Activated CD4-positive, alpha-beta memory T cell treated with anti-CD3 and anti-CD28 coated beads, Interleukin-2, amount 10 ng/mL, durations not matched to agents 7 days and 5 days (primary cell): ENCODE measurements at regions of chr6 and their contacts with region 1.

Region 1: GRCh38 chr6:75601304-75602245 is at the start of gene SENP6:
- DNase-seq: peak; percentile 75
- H3K4me3 Mint-ChIP-seq: peak within 1 kb of the TSS; percentile 90
- H3K27ac Mint-ChIP-seq: peak within 1 kb of the TSS; percentile 88
- H3K4me1 Mint-ChIP-seq: peaks cover 47% of the 10 kb centered on the region
- H3K27me3 Mint-ChIP-seq: no peaks in the 10 kb centered on the region
- total RNA-seq, gene SENP6: 58.6 to 59.2 TPM

Region 2: GRCh38 chr6:74735304-74735703 is 866.3 kb before region 1 on chr6:
- CTCF ChIA-PET with region 1: no interaction called
- POLR2A ChIA-PET with region 1: no interaction called
- DNase-seq: no peak
- H3K4me3 Mint-ChIP-seq: no peak overlapping the region
- H3K27ac Mint-ChIP-seq: no peak overlapping the region
- H3K4me1 Mint-ChIP-seq: no peaks in the 10 kb centered on the region
- H3K27me3 Mint-ChIP-seq: no peaks in the 10 kb centered on the region

Region 3: GRCh38 chr6:75284632-75285286 is 316.8 kb before region 1 on chr6 and contains the start of gene TMEM30A:
- CTCF ChIA-PET with region 1: interaction called, 3 read pairs
- POLR2A ChIA-PET with region 1: interaction called, 25 read pairs
- DNase-seq: peak; percentile 97
- H3K4me3 Mint-ChIP-seq: no peak within 1 kb of the TSS
- H3K27ac Mint-ChIP-seq: no peak within 1 kb of the TSS
- H3K4me1 Mint-ChIP-seq: peaks cover 47% of the 10 kb centered on the region
- H3K27me3 Mint-ChIP-seq: no peaks in the 10 kb centered on the region
- total RNA-seq, gene TMEM30A: 60.1 to 60.4 TPM

Region 4: DNA sequence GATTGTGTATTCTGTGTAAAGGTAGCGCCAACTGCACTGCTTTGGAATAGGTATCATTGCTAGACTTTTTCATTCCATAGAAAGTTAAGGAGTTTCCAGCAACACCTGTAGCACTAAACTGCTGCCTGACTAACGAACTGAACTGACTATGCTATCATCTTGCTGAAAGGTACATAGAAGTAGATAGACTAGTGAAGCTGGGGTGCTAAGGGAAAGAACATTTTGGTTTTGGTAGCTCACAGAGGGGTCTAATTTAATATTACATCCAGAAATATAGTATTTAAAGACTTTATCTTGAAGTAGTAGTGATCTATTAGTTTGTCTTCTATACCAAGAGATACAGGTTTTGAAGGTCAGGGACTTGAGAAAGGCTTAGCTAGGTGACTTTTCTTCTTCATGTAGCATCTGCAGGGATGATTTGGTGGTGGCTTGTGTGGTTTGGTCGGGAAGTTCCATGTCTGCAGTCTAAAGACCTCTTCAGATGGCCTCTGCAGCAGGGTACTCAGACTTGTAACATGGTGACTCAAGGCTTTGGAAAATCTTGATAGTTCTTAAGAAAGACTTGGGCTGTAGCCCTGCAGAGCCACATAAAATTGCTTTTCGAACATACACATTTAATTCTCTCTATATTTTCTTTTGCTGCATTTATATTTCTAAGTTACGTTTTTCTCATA is 10.3 kb after region 1 on chr6:
- CTCF ChIA-PET with region 1: interaction called, 3 read pairs
- POLR2A ChIA-PET with region 1: interaction called, 49 read pairs
- DNase-seq: peak; percentile 38
- H3K4me3 Mint-ChIP-seq: no peak overlapping the region
- H3K27ac Mint-ChIP-seq: peak overlapping the region; percentile 57
- H3K4me1 Mint-ChIP-seq: peaks cover 68% of the 10 kb centered on the region
- H3K27me3 Mint-ChIP-seq: no peaks in the 10 kb centered on the region